Posterior vena cava (tissue), 2 donors: ENCODE measurements at regions of chr2 and their contacts with region 1.

Region 1: DNA sequence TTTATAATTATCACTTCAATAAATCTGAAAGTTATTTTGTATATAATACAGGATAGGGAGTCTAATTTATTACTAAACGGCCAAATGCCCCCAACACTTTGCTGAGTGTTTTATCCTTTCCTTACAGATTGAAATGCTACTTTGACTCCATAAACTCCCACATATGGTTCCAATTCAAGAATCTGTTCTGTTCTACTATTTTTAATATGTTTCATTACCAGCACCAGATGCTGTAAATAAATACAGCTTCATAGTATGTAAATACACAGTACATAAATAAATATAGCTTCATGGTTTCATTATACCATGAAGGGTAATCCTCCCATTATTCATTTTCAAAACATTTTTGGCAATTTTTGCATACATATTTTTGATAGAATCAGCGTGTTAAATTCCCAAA is 34.0 kb upstream of the MREG start:
- DNase-seq: no peak

Region 2: GRCh38 chr2:216057688-216058193 is 10.3 kb after region 1 on chr2:
- intact Hi-C with region 1: loop called in 1 of 2 experiments (anchors 1 kb)
- DNase-seq: no peak

Region 3: DNA sequence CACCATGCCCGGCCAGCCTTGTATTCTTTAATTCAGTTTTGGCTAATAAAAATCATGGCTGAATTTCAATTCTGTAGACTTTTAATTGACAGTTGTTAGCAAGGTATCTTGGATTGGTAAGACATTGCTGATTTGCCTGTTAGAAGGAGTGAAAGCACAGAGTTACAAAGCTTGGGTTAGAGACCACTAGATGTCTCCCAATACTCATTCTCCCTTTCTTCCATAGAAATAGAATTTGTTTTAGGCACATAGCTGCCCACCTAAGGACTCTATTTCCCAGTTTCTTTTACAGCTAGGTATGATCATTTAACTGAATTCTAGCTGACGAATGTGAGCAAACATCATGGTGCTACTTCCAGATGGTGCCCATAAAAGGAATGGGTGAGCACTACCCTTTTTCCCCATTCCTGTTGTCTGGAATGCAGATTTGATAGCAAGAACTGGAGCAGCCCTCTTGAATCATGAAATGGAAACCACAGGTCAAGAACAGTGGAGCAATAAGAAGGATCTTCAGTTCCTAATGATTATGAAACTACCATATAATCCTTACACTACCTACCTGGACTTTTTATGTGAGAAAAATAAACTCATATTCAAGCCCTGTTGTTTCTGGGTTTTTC is 16.7 kb after region 1 on chr2:
- intact Hi-C with region 1: loop called in 1 of 2 experiments (anchors 2 kb)
- DNase-seq: no peak